ENCODE measurements at regions of chr15 and their contacts with region 1.

Region 1: DNA sequence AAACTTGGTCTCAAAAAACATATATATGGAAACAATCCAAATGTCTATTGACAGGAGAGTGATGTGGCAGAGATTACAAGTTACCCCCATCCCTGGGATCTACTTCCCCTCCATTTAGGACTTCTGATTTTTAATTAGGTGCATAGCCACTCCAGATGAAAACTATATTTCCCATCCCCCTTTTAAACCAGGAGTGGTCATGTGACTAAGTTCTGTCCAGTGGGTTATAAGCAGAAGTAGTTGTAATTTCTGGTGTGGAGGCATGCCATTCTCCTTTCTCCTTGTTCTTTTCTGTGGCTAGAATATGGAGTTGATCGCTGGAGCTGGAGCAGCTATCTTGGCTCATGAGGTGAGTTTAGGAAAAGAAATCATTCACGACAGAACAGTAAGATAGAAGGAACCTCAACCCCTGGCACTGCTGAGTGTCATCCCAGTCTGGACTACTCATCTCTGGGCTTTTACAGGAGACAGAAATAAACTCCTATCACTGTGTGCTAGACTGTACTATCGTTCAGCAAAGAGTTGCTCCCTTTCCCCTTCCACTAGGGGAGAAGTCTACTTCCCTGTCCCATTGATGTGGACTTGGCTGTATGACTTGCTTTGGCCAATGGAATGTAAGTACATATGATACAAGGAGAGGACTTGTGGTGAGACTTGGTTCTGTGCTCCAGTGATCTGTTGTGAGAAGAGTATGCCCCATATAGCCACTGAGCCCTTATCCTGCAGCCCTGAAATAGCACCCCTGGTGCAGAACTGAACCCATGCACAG is 5.1 kb upstream of the KIF7 start:
- DNase-seq: no peak
- H3K4me3 ChIP-seq: no peak overlapping the region
- H3K27me3 ChIP-seq: no peaks in the 10 kb centered on the region
- CTCF ChIP-seq: no peak

Region 2: DNA sequence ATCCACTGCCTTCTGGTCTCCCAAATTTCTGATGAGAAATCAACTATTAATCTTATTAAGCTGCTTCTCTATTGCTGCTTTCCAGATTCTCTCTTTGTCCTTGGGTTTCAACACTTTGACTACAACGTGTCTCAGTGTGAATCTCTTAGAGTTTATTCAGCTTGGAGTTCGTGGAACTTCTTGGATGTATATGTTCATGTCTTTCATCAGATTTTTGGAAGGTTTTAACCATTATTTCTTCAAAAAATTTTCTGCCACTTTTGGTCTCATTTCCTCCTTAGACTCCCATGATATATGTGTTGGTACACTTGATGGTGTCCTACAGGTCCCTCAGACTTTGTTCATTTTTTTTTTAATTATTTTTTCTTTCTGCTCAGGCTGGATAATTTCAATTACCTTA is 49.1 kb before region 1 on chr15:
- CTCF ChIA-PET with region 1: no interaction called
- POLR2A ChIA-PET with region 1: no interaction called
- DNase-seq: no peak
- H3K4me3 ChIP-seq: no peak overlapping the region
- H3K27me3 ChIP-seq: no peaks in the 10 kb centered on the region
- CTCF ChIP-seq: no peak

Region 3: GRCh38 chr15:89647191-89647851 is 13.1 kb before region 1 on chr15:
- CTCF ChIA-PET with region 1: interaction called, 12 read pairs
- POLR2A ChIA-PET with region 1: no interaction called
- DNase-seq: no peak
- H3K4me3 ChIP-seq: no peak overlapping the region
- H3K27me3 ChIP-seq: no peaks in the 10 kb centered on the region
- CTCF ChIP-seq: peak; percentile 95

Measured in BJ (cell line).